ENCODE measurements at regions of chr1 and their contacts with region 1.

Region 1: DNA sequence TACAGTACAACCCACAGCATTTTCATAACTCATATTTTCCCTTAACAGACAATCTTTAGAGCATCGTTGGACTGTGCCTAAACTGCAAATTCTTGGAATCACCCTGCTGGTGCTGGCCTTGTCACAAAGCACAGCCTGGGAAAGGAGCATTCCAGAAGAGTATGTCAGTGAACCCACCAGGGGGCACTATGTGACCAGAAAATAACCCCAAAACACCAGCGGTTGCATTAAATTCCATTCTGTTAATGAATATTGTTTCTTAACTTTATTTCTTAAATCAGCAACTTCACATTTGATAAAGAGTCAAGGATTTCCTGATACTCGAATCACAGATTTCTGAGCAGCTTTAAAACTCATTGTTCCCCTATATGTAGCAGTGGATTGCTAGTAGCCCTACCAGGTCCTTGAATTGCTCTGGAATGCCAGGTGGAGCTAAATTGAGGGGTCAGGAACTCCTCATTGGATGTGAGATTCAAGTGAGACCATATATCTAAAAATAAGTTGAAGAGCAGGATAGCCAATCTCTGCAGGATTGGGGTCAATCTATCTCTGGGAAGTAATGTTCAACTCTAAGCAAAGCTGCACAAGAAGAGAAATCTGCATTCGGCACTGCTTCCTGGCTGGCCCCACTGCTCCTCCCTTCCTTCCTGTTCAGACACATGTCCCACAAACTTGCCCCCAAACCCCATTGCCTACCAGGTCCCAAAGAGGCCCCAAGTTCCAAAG is 12.7 kb upstream of the RAB4A start:
- DNase-seq: peak; percentile 65
- H3K4me3 Mint-ChIP-seq: no peak overlapping the region
- H3K27ac Mint-ChIP-seq: peak overlapping the region; percentile 42
- H3K4me1 Mint-ChIP-seq: peaks cover 30% of the 10 kb centered on the region
- H3K27me3 Mint-ChIP-seq: no peaks in the 10 kb centered on the region

Region 2: DNA sequence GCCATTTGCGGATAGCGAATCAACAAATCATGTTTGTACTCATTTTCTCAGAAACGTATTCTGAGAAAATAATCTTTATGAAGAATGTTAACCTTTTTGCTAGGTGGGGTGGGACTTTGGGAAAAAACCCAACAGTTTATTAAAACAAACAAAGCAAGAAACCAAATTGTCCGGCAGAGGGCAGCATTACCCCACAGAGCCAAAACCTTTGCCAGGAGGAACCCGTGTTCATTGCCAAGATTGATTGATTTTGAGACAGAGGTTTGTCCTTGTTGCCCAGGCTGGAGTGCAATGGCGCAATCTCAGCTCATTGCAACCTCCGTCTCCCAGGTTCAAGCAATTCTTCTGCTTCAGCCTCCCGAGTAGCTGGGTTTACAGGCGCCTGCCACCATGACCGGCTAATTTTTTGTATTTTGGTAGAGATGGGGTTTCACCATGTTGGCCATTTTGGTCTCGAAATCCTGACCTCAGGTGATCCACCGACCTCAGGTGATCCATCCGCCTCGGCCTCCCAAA is 593.7 kb before region 1 on chr1:
- CTCF ChIA-PET with region 1: interaction called, 18 read pairs
- POLR2A ChIA-PET with region 1: interaction called, 4 read pairs
- DNase-seq: peak; percentile 80
- H3K4me3 Mint-ChIP-seq: no peak overlapping the region
- H3K27ac Mint-ChIP-seq: no peak overlapping the region
- H3K4me1 Mint-ChIP-seq: no peaks in the 10 kb centered on the region
- H3K27me3 Mint-ChIP-seq: peaks cover 20% of the 10 kb centered on the region

Region 3: DNA sequence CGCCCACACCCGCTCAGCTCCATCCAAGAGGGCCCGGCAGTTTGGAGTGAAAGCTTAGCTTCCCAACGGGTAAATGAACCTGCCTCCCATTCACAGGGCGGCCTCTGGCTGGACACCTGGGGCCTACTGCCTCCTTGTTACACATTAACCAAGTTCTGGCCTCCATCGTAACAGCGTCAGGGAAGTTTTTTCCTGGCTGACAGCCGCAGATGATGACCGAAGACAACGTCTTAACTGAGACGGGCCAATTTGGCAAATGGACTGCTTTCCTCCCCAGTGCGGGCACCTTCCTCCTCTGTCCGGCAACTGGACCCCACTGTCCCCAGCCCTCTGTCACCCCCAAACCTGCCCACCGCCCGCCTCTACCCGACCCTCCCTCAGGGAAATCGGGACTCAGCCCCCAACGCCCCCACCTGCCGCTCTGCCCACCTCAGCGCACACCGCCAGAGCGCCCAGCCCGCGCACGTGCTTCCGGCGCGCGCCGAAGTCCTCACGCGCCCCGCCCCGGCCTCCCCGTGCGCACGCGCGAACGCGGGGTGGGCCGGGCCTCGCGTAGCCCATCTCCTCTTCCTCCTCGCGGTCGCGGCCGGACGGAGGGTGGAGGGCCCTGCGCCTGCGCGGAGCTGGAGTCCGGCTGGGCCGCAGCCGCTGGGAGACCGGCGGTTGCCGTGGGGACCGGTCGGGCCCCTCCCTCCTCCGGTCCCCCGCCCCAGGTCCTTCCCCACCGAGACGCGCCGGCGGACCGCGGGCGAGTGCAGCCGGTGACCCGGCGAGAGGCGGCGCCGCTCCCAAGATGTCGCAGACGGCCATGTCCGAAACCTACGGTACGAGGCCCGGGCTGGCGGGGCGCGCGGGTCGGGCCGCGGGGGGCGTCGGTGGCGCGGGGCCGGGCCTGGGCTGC is 12.6 kb after region 1 on chr1 and contains the start of gene RAB4A:
- CTCF ChIA-PET with region 1: interaction called, 14 read pairs
- POLR2A ChIA-PET with region 1: interaction called, 4 read pairs
- DNase-seq: peak; percentile 82
- H3K4me3 Mint-ChIP-seq: peak within 1 kb of the TSS; percentile 89
- H3K27ac Mint-ChIP-seq: peak within 1 kb of the TSS; percentile 68
- H3K4me1 Mint-ChIP-seq: peaks cover 38% of the 10 kb centered on the region
- H3K27me3 Mint-ChIP-seq: no peaks in the 10 kb centered on the region
- total RNA-seq, gene RAB4A: 30.9 to 38.0 TPM

Region 4: GRCh38 chr1:229287267-229287666 is 29.1 kb after region 1 on chr1:
- CTCF ChIA-PET with region 1: no interaction called
- POLR2A ChIA-PET with region 1: no interaction called
- DNase-seq: no peak
- H3K4me3 Mint-ChIP-seq: no peak overlapping the region
- H3K27ac Mint-ChIP-seq: no peak overlapping the region
- H3K4me1 Mint-ChIP-seq: peaks cover 43% of the 10 kb centered on the region
- H3K27me3 Mint-ChIP-seq: no peaks in the 10 kb centered on the region

Region 5: DNA sequence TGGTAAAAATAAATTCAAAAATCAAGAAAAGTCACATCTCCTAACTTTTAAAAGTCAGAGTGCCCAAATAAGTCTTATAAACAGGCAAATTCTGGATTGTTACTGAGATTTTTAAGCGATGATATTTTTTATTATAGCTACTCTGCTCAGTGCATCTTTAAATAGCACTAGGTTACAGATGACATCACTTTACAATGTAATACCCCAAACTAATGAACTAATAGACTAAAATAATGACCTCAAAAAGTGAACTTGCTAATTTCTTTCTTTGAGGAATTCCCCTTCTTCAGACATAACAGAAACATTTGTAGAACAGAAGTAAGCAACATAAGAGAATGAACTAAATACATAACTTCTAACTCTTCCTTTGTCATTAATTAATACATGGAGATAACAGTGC is 208.7 kb after region 1 on chr1:
- CTCF ChIA-PET with region 1: interaction called, 13 read pairs
- POLR2A ChIA-PET with region 1: no interaction called
- DNase-seq: no peak
- H3K4me3 Mint-ChIP-seq: no peak overlapping the region
- H3K27ac Mint-ChIP-seq: no peak overlapping the region
- H3K4me1 Mint-ChIP-seq: no peaks in the 10 kb centered on the region
- H3K27me3 Mint-ChIP-seq: no peaks in the 10 kb centered on the region

Region 6: GRCh38 chr1:229487181-229487580 is 229.0 kb after region 1 on chr1:
- CTCF ChIA-PET with region 1: interaction called, 145 read pairs
- POLR2A ChIA-PET with region 1: interaction called, 6 read pairs
- DNase-seq: no peak
- H3K4me3 Mint-ChIP-seq: no peak overlapping the region
- H3K27ac Mint-ChIP-seq: no peak overlapping the region
- H3K4me1 Mint-ChIP-seq: no peaks in the 10 kb centered on the region
- H3K27me3 Mint-ChIP-seq: no peaks in the 10 kb centered on the region